GM10248 (cell line): ENCODE measurements at regions of chr1 and their contacts with region 1.

Region 1: GRCh38 chr1:165928075-165928731 is 100.8 kb downstream of the UCK2 start:
- DNase-seq: peak; percentile 74
- CTCF ChIP-seq: peak; percentile 65

Region 2: GRCh38 chr1:164876398-164877116 is 1051.6 kb before region 1 on chr1:
- CTCF ChIA-PET with region 1: no interaction called
- POLR2A ChIA-PET with region 1: no interaction called
- DNase-seq: no peak
- CTCF ChIP-seq: no peak

Region 3: DNA sequence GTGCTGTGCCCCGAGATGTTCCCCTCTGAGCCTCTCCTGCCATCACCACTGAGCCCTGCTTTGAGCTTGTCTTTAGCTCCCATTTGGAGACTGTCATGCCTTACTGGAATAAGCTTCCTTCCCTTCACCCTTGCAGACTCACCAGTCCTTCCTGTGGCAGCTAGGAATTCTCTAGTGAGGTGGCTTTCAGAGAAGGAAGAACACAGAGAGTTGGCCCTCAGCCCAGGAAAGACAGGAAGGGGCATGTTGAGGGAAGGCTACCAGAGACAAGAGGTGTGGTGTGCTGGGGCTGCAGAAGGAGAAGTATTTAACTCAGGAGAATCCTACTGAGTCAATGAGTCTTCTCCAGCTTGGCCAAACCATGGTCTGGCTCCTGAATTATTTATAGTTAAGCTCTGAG is 24.5 kb before region 1 on chr1:
- CTCF ChIA-PET with region 1: interaction called, 13 read pairs
- POLR2A ChIA-PET with region 1: no interaction called
- DNase-seq: no peak
- CTCF ChIP-seq: no peak

Region 4: GRCh38 chr1:165949335-165950130 is 21.3 kb after region 1 on chr1:
- CTCF ChIA-PET with region 1: interaction called, 22 read pairs
- POLR2A ChIA-PET with region 1: no interaction called
- DNase-seq: no peak
- CTCF ChIP-seq: no peak

Region 5: DNA sequence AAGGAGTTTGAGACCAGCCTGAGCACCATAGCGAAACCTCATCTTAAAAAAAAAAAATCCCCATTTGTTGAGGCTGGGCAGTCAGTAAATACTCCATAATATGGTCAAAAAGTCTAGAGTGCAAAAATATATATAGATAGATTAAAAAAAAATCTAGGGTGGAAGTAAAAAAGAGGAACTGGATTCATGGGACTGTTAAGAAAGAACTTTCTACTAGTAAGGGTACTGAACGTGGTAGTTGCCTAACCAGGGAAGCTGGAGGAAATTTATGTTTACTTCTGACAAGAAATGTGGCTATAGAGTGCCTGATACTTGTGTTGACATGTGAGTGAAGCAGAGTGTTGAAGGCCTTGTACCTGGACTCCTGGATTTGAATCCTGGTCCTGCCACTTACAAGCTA is 504.5 kb after region 1 on chr1:
- CTCF ChIA-PET with region 1: interaction called, 91 read pairs
- POLR2A ChIA-PET with region 1: no interaction called
- DNase-seq: no peak
- CTCF ChIP-seq: no peak

Region 6: GRCh38 chr1:167059045-167059808 is 1131.0 kb after region 1 on chr1:
- CTCF ChIA-PET with region 1: interaction called, 11 read pairs
- POLR2A ChIA-PET with region 1: no interaction called
- DNase-seq: peak; percentile 64
- CTCF ChIP-seq: peak; percentile 91